Psoas muscle (tissue), 8 donors: ENCODE measurements at regions of chrX and their contacts with region 1.

Region 1: DNA sequence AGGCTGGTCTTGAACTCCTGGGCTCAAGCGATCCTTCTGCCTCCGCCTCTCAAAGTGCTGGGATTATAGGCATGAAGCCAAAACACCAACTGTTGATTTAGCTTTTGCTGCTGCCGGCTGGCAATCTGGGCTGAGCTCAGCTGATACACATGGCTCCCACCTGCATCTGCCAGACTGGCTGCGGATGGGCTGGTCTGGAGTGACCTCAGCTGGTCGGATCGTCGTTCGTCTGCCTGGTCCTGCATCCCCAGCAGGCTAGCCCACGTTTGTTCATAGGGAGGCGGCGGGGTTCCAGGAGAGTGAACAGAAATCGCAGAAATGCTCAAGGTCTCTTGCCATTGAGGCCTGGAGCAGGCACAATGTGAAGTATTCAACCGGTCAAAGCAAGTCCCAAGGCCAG is 74.4 kb upstream of the DDX3X start:
- DNase-seq: no peak
- ATAC-seq: no peak
- H3K4me3 ChIP-seq: no peak overlapping the region
- H3K27ac ChIP-seq: no peak overlapping the region
- H3K4me1 ChIP-seq: no peaks in the 10 kb centered on the region
- H3K27me3 ChIP-seq: peaks cover 0 to 14% (median 0%) of the 10 kb centered on the region in 3 donors
- CTCF ChIP-seq: no peak

Region 2: GRCh38 chrX:40539214-40540142 is 720.0 kb before region 1 on chrX:
- intact Hi-C with region 1: loop called in 1 of 2 experiments (anchors 10 kb)
- DNase-seq: peak; percentile 49 to 69
- ATAC-seq: peak in 3 of 4 donors; percentile 52 to 53 (median 52)
- H3K4me3 ChIP-seq: no peak overlapping the region
- H3K27ac ChIP-seq: no peak overlapping the region
- H3K4me1 ChIP-seq: no peaks in the 10 kb centered on the region
- H3K27me3 ChIP-seq: peaks cover 0 to 52% (median 0%) of the 10 kb centered on the region in 3 donors
- CTCF ChIP-seq: no peak

Region 3: DNA sequence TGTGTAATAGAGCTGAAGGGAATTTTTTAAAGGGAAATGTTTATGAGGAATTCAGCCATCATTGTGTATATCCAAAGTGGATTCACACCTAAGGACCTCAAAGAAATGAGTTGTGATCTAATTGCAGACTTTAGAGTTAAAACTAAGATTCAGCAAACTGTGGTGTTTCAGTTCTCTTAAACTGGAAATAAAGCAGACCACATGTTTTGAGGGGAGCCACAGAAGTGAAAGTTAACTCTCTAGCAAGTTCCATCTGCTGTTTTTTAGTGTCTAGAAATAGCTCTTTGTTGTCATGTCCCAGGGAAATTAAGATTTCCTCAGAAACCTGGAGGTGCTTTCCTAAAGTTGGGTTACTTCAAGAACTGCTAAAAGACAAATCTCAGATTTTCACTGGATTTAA is 22.9 kb before region 1 on chrX:
- intact Hi-C with region 1: no loop called
- DNase-seq: no peak
- ATAC-seq: no peak
- H3K4me3 ChIP-seq: no peak overlapping the region
- H3K27ac ChIP-seq: no peak overlapping the region
- H3K4me1 ChIP-seq: no peaks in the 10 kb centered on the region
- H3K27me3 ChIP-seq: no peaks in the 10 kb centered on the region
- CTCF ChIP-seq: no peak

Region 4: GRCh38 chrX:41737065-41737464 is 477.5 kb after region 1 on chrX:
- intact Hi-C with region 1: no loop called
- DNase-seq: no peak
- ATAC-seq: no peak
- H3K4me3 ChIP-seq: no peak overlapping the region
- H3K27ac ChIP-seq: no peak overlapping the region
- H3K4me1 ChIP-seq: no peaks in the 10 kb centered on the region
- H3K27me3 ChIP-seq: no peaks in the 10 kb centered on the region
- CTCF ChIP-seq: no peak